ENCODE measurements at regions of chr17 and their contacts with region 1.

Region 1: DNA sequence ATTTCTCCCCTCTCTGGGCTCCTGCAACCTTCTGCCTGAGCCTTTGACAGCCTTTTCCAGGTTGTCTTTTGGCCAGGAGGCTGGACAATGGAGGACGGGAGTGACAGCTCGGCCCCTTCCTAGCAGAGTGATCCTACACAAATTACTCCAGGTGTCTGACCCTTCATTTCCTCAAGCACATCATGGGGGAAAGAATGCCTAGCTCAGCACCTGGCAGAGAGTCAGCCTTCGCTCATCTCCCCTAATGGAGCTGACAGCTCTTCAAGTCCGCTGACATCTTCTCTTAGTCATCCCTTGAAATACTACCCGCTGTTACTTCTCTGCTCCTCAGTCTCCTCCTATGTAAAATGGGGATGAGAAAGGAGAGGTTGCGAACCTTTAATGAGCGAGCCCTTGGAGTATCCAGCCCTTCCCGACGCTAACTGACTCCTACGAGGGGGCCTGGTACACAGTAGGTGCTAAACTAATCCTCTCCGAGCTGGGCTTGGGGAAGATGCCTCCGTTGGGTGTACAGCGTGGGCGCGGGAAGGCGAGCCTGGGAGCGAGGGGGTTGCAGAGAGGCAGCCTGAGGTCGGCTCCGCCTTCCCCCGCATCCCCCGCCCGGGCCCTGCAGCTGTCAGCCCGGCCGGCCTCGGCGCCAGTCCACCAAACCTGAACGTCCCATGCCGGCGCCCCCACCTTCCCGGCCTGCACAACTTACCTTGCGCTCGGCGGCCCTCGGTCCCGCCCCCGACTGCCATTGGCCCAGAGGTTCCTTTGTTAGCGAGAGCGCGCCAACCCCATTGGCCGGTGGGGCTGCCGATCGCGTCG is 481 bp upstream of the MPRIP start:
- DNase-seq: peak in 1 of 2 donors; percentile 97
- H3K4me3 ChIP-seq: peak overlapping the region; percentile 52 to 56
- H3K27ac ChIP-seq: peak overlapping the region; percentile 82
- H3K4me1 ChIP-seq: peaks cover 57% of the 10 kb centered on the region
- H3K27me3 ChIP-seq: no peaks in the 10 kb centered on the region
- CTCF ChIP-seq: no peak
- POLR2A ChIP-seq: no peak

Region 2: DNA sequence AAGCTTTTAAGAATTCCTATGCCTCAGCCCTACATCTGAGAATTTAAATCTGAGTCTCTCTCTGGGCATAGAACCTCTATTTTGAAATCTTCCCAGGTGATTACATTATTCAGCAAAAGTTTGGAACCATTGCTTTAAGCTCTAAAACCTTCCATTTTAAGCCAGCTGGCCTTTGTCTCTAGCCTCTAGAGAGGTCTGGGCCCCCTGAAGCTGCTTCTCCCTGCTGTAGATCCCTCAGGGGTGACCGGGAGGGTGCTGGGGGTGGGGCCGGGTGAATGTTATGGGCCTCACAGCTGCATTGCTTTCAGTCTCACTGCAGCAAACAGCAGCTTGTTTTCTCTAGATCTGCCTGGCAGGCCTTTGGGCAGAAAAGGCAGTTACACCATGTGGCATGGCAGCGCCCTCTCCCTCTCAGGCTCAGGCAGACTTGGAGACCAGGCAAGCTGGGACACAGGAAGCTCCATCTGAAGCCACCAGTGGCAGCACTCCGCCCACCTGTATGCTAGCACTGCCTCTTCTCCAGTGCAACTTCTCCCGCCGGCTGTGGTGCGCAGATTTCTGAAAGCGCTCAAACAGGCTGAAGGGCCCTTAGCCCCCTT is 66.8 kb after region 1 on chr17:
- intact Hi-C with region 1: loop called (anchors 10 kb)
- DNase-seq: no peak
- H3K4me3 ChIP-seq: no peak overlapping the region
- H3K27ac ChIP-seq: peak overlapping the region; percentile 43
- H3K4me1 ChIP-seq: peaks cover 74% of the 10 kb centered on the region
- H3K27me3 ChIP-seq: no peaks in the 10 kb centered on the region
- CTCF ChIP-seq: no peak
- POLR2A ChIP-seq: no peak

Region 3: GRCh38 chr17:17641621-17642409 is 600.0 kb after region 1 on chr17:
- intact Hi-C with region 1: no loop called
- DNase-seq: no peak
- H3K4me3 ChIP-seq: no peak overlapping the region
- H3K27ac ChIP-seq: no peak overlapping the region
- H3K4me1 ChIP-seq: no peaks in the 10 kb centered on the region
- H3K27me3 ChIP-seq: no peaks in the 10 kb centered on the region
- CTCF ChIP-seq: peak; percentile 79 to 98 (median 97)
- POLR2A ChIP-seq: no peak